GM13976 (cell line): ENCODE measurements at regions of chr18 and their contacts with region 1.

Region 1: DNA sequence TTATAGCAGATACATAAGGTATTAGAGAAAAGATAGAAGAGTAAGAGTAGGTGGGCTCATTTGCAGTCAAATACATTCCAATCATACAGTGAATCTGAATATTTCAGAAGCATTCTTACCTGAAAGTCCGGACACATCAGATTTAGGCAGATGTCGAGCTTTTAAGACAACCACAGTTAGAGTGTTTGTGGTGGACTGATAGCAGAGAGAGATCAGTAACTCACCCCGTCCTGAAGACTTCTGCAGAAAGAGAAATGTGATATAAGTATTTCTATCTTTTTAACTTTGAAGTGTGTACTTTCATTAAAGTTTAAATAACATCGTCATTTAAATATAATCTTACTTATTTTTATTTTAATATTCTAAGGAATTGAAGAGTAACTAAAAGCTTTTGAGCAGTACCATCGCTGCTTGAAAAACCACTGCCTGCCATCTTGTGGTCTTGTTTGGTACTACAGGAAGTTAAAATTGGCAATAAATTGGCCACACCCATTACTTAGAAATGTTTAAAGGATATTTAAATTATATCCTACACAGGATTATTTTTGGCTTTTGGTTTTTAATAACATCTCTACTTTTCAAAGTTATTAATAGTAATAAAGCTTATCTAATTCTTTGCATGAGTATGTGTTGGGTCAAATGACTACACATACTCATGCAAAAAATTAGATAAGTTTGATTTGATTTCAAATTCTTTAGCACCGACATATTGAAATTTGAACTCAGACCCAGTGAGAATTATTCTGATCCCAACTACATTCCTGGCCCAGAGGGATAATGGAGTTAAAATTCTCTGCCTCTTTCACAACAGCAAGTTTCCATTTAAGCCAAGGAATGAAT is 5.5 kb downstream of the SYT4 start:
- DNase-seq: peak; percentile 19
- CTCF ChIP-seq: peak; percentile 71

Region 2: DNA sequence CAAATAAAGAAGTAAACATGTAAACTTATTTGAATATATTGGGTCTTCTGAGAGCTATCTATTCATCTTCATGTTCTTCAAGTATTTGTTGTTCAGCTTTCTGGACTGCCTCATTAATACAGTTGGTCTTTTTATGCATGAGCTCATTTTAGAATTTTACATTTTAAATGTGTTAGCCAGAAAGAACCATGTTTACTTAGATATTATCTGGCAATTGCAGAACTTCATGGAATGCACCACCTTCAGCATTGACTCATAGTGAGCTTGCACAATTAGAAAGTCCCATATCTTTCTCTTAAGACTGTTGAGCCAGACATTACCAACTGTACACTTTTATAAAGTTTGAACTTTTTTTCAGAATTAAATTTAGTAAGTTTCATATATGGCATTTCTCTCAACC is 693.0 kb before region 1 on chr18:
- in situ Hi-C with region 1: loop called (anchors 25 kb)
- DNase-seq: no peak
- CTCF ChIP-seq: no peak